ENCODE measurements at regions of chr6 and their contacts with region 1.

Region 1: GRCh38 chr6:15691250-15691869 is 28.5 kb upstream of the DTNBP1 start:
- DNase-seq: peak; percentile 83 to 89 (median 86)
- ATAC-seq: peak; percentile 98
- H3K4me3 ChIP-seq: no peak overlapping the region
- H3K27ac ChIP-seq: peak overlapping the region in 1 of 4 donors; percentile 43
- H3K4me1 ChIP-seq: peaks cover 15% of the 10 kb centered on the region
- H3K27me3 ChIP-seq: no peaks in the 10 kb centered on the region
- CTCF ChIP-seq: peak; percentile 93 to 100 (median 100)
- POLR2A ChIP-seq: no peak

Region 2: DNA sequence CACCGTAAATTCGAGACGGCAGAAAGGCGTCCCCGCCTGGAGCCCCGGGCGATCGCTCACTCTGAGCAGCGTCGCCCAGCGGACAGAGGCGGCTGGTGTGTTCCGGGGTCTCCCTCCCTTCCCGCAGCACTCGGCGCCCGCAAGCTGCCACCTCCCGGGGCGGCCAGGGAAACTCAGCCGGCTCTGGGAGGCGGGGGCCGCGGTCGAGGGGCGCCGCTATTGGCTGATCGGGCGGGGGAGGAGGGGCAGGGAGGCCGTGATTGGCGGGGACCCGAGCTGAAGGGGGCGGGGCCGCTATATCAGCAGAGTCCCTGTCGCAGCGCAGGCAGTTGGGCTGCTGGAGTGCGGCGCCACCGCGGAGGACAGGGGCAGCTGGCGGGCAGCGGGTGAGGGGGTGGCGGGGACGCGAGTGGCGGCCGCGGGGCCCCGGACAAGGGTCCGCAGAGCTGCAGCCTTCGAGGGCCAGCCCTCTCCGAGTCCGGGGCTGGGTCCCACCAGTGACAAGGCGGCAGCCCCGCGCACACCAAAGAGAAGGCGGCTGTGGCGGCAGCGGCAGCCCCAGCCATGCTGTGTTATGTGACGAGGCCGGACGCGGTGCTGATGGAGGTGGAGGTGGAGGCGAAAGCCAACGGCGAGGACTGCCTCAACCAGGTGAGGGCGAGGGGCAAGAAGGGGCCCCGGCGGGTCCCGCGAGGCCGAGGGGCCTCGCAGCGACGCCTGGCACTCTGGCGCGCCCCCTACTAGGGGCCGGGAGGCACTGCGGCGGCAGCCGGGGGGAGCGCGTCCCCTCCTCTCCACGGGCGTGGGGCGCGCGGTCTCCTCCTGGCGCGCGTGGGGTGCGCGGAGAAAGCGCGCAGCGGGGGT is 437.6 kb after region 1 on chr6 and contains the start of gene MYLIP:
- intact Hi-C with region 1: loop called (anchors 10 kb)
- DNase-seq: peak; percentile 98 to 99 (median 99)
- ATAC-seq: peak; percentile 92
- H3K4me3 ChIP-seq: peak within 1 kb of the TSS; percentile 90 to 99
- H3K27ac ChIP-seq: peak within 1 kb of the TSS; percentile 91 to 99 (median 96)
- H3K4me1 ChIP-seq: peaks cover 34% of the 10 kb centered on the region
- H3K27me3 ChIP-seq: no peaks in the 10 kb centered on the region
- CTCF ChIP-seq: peak; percentile 54 to 94 (median 91)
- POLR2A ChIP-seq: peak; percentile 100
- total RNA-seq, gene MYLIP: 13.2 to 28.7 TPM

Region 3: GRCh38 chr6:16206595-16207037 is 515.3 kb after region 1 on chr6:
- intact Hi-C with region 1: loop called (anchors 5 kb)
- DNase-seq: peak; percentile 60 to 79 (median 73)
- ATAC-seq: peak; percentile 85
- H3K4me3 ChIP-seq: no peak overlapping the region
- H3K27ac ChIP-seq: no peak overlapping the region
- H3K4me1 ChIP-seq: no peaks in the 10 kb centered on the region
- H3K27me3 ChIP-seq: no peaks in the 10 kb centered on the region
- CTCF ChIP-seq: peak; percentile 84 to 98 (median 95)
- POLR2A ChIP-seq: no peak